Common myeloid progenitor, CD34-positive (primary cell): ENCODE measurements at regions of chr1 and their contacts with region 1.

Region 1: GRCh38 chr1:6171548-6172119 is 8.5 kb downstream of the CHD5 start:
- DNase-seq: peak; percentile 45 to 66 (median 60)
- H3K4me3 ChIP-seq: no peak overlapping the region
- H3K27ac ChIP-seq: no peak overlapping the region
- H3K4me1 ChIP-seq: peaks cover 0 to 18% (median 10%) of the 10 kb centered on the region in 4 experiments
- H3K27me3 ChIP-seq: peaks cover 0 to 31% (median 2%) of the 10 kb centered on the region in 5 experiments

Region 2: GRCh38 chr1:5680630-5681029 is 491.0 kb before region 1 on chr1:
- CTCF ChIA-PET with region 1: no interaction called
- POLR2A ChIA-PET with region 1: no interaction called
- DNase-seq: no peak
- H3K4me3 ChIP-seq: no peak overlapping the region
- H3K27ac ChIP-seq: no peak overlapping the region
- H3K4me1 ChIP-seq: peaks cover 0 to 7% (median 3%) of the 10 kb centered on the region in 4 experiments
- H3K27me3 ChIP-seq: peaks cover 0 to 11% (median 0%) of the 10 kb centered on the region in 5 experiments

Region 3: DNA sequence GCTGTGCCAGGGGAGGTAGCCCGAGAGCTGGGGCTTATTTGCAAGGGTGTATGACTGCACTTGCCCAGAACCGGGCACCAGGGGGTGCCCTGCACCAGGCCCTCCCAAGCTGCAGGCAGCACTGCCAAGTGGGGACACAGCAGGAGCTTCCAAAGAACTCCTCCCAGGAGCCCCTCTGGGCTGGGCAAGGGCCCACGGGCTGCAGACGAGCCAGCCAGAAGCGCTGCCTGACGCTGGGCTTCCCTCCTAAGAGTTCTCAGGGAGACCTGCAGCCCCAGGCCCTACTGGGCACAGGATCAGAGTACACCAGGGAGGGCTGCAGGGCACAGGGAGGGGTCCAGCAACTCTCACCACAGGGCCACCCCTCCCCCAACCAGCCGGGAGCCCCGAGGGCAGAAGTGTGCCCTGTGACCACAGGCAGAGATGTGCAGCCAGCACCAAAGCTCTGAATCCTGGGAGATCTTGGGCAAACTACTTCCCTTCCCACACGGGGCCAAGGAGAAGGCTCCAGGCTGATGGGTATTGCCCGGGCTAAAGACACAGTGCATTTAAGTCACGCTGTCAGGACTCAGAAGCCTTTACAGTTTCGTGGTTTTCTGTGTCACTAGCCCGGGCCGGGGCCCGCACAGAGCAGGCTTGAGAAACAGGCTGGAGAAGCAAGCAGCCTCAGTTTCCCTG is 62.6 kb before region 1 on chr1:
- CTCF ChIA-PET with region 1: interaction called, 18 read pairs
- POLR2A ChIA-PET with region 1: interaction called, 4 read pairs
- DNase-seq: peak; percentile 76 to 89 (median 82)
- H3K4me3 ChIP-seq: no peak overlapping the region
- H3K27ac ChIP-seq: no peak overlapping the region
- H3K4me1 ChIP-seq: peaks cover 0 to 7% (median 2%) of the 10 kb centered on the region in 4 experiments
- H3K27me3 ChIP-seq: peaks cover 0 to 11% (median 0%) of the 10 kb centered on the region in 5 experiments

Region 4: DNA sequence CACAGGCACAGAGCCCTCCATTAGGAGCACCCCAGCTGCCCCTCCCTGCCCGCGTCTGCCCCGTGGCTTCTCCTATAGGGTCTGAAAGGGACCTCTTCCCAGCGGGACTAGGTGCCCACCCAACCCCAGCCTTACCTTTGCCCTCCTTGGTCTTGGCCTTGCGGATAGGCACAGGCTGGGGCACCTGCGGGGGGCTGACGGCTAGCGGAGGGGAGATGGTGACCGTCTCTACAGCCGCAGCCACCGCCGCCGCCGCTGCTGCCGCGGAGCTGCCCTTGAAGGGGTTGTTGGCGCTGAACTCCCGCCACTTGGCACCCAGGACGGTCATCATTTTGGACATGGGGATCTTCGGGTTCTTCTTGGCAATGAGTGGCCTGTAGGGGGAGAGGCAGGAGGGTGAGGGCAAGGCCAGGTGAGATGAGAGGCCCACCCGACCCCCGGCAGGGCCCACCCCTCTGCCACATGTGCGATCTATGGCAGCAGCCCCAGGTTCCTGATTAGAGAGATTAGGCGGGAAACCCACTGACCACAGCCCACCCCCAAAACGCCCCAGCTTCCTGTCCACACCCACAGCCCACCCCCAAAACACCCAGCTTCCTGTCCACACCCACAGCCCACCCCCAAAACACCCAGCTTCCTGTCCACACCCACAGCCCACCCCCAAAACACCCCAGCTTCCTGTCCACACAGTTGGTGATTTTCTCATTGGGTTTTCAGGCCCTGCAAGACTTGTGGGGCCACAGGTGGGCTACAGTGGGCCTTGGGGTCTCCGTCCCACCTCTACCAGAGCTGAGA is 16.9 kb before region 1 on chr1:
- CTCF ChIA-PET with region 1: interaction called, 11 read pairs
- POLR2A ChIA-PET with region 1: interaction called, 4 read pairs
- DNase-seq: peak in 2 of 3 donors; percentile 38 to 45
- H3K4me3 ChIP-seq: no peak overlapping the region
- H3K27ac ChIP-seq: no peak overlapping the region
- H3K4me1 ChIP-seq: peaks cover 0 to 38% (median 23%) of the 10 kb centered on the region in 4 experiments
- H3K27me3 ChIP-seq: peaks cover 0 to 2% (median 0%) of the 10 kb centered on the region in 5 experiments